Left colon (tissue), 2 donors: ENCODE measurements at regions of chr2 and their contacts with region 1.

Region 1: DNA sequence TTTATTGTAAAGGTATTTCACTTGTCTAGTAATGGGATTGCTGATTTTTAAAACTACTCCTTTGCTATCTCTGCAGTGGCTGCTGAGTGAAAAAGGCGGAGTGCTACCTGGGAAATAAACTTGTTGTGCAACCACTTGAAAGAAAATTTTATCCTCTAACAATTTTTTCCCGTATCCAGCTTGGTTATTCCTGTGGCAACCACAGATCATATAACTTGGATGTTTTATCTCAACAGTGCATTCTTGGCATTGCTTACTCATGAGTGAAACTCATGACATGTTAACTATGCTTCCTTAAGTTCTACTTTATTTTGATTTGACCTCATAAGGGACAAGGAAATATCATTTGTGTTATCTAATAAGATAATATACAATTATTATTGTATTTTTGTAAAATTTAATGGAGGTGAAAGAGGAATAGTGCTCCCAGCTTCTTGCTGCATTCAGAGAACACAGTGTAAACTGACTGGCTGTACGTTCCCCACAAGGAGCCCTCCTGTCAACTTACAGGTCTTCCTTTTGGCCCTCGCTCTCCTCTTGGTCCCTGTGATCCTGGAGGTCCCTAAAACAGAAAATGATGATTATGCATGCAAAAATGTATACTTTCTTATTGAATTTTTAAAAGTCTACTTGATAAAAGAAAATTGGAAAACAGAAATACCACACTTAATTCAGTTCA is 82.7 kb downstream of the COL5A2 start:
- DNase-seq: no peak
- ATAC-seq: no peak

Region 2: GRCh38 chr2:189287982-189288521 is 191.1 kb after region 1 on chr2:
- intact Hi-C with region 1: loop called in 1 of 2 experiments (anchors 5 kb)
- DNase-seq: no peak
- ATAC-seq: peak; percentile 58

Region 3: DNA sequence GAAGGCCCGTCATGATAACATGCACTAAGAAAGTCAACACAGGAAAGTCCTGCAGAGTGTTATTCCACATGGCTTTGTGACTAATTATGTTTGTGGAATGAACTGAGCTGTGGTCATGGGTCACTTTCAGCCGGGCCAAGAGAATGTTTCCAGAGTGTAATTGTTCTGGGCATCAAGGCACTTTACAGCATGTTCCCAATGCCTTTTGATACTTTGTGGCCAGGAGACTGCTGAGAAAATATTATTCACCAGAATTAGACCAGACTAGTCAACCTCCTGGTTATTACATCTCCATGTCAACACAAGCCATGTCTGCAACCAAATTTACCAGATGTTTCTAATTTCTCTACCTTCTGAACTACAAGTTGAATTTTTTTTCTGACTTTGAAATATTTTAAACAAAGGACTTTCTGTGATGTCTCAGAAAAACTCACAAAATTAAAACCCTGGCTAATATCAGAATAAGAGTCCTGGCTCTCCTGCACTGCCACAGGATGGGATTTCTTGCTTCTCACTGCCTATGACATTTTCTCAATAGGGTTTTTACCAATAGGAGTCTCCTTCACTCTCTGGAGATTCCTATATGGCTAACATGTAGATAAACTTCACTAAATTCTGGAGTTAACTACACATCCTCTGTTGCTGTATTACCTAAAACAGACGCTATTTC is 253.8 kb after region 1 on chr2:
- intact Hi-C with region 1: loop called in 1 of 2 experiments (anchors 10 kb)
- DNase-seq: peak in 1 of 2 donors; percentile 38
- ATAC-seq: no peak

Region 4: GRCh38 chr2:189412330-189412953 is 315.5 kb after region 1 on chr2:
- intact Hi-C with region 1: loop called in 1 of 2 experiments (anchors 5 kb)
- DNase-seq: no peak
- ATAC-seq: peak; percentile 41